Activated T-helper 2 cell treated with anti-CD3 and anti-CD28 coated beads, Interferon-gamma antibody, Interleukin-2, Interleukin-4, amounts not matched to agents 10 μg/mL and 5 μg/mL and 100 μg/mL, durations not matched to agents 14 hours and 24 hours and 36 hours (primary cell): ENCODE measurements at regions of chr7 and their contacts with region 1.

Region 1: DNA sequence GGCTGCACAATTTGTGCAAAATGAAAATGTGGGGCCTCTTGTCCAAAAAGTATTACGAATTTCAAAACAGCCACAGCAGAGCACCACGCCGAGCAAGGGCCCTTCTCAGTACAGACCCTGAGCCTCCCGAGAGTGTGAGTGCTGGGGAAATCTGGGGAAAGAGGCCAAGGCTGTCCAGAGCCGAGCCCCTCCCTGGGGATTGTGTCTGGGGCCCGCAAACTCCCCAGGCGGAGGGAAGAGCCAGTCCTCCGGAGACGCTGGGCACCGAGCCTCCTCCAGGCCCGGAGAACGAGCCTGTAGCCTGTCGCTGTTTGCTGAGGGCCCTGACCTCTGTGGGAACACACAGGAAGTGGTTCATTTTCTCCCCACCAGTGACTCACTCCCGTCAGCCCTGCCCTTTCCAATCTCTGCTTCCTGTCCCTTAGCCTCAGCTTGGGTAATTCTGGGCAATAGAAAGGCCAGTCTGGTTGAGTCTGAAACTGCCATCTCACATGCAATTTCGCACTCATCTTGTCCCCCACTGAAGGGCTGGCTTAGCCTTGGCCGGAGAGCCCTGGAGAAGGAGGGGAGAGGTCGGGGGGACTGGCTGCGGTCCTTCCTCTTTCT is 19.5 kb upstream of the GNA12 start:
- DNase-seq: peak; percentile 71
- H3K4me3 Mint-ChIP-seq: peak overlapping the region; percentile 68
- H3K27ac Mint-ChIP-seq: peak overlapping the region; percentile 94
- H3K4me1 Mint-ChIP-seq: peaks cover 23% of the 10 kb centered on the region
- H3K27me3 Mint-ChIP-seq: no peaks in the 10 kb centered on the region

Region 2: DNA sequence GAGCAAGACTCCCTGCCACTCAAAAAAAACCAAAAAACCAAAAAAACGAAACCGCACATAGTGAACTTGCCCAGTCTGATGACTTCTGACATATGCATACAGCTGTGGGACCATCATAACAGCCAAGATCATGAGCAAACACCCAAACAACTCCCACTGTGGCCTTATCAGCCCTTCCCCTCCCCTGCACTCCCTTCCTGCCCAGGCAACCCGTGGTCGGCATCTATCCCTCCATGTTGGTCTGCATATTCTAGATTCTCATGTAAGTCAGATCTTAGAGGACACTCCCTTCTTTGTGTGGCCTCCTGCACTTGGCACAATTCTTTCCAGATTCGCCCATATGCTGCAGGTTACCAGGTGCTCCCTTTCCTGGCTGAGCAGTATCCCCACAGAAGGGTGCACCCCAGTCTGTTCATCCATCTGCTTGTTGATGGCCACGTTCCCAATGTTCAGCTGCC is 92.3 kb before region 1 on chr7:
- intact Hi-C with region 1: loop called (anchors 2 kb)
- DNase-seq: no peak
- H3K4me3 Mint-ChIP-seq: peak overlapping the region; percentile 8
- H3K27ac Mint-ChIP-seq: peak overlapping the region; percentile 94
- H3K4me1 Mint-ChIP-seq: peaks cover 48% of the 10 kb centered on the region
- H3K27me3 Mint-ChIP-seq: no peaks in the 10 kb centered on the region

Region 3: DNA sequence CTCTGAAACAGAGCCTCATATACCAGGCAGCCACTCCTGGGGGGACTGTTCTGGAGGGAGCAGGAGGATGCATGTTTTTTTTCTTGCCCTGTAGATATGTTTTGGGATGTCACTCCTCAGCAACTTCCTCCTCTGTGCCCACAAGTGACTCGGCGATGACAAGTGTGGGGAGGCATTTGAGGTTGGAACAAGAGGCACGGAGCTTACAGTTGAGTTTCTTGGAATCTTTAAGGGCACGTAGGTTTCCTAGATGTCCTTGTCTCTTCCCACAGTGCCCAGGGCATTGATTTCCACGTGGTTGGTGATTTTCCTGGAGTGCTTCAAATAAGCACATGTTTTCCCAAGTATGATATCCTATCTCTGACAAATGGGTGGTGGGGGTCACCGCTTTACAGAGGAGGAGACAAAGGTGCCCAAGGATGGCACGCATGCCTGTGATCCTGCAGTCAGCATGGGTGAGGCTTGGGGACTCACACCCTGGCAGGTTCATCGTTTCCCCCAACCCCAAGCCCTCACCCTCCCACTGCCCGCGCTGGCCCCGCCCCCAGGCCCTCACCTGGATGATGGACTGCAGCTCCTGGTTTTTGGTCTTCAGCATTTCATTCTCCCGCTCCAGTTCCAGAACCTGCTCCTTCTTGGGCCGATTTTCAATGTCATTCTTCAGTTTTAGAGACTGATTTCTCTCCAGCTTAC is 75.8 kb after region 1 on chr7:
- intact Hi-C with region 1: no loop called
- DNase-seq: no peak
- H3K4me3 Mint-ChIP-seq: no peak overlapping the region
- H3K27ac Mint-ChIP-seq: peak overlapping the region; percentile 40
- H3K4me1 Mint-ChIP-seq: peaks cover 8% of the 10 kb centered on the region
- H3K27me3 Mint-ChIP-seq: no peaks in the 10 kb centered on the region

Region 4: DNA sequence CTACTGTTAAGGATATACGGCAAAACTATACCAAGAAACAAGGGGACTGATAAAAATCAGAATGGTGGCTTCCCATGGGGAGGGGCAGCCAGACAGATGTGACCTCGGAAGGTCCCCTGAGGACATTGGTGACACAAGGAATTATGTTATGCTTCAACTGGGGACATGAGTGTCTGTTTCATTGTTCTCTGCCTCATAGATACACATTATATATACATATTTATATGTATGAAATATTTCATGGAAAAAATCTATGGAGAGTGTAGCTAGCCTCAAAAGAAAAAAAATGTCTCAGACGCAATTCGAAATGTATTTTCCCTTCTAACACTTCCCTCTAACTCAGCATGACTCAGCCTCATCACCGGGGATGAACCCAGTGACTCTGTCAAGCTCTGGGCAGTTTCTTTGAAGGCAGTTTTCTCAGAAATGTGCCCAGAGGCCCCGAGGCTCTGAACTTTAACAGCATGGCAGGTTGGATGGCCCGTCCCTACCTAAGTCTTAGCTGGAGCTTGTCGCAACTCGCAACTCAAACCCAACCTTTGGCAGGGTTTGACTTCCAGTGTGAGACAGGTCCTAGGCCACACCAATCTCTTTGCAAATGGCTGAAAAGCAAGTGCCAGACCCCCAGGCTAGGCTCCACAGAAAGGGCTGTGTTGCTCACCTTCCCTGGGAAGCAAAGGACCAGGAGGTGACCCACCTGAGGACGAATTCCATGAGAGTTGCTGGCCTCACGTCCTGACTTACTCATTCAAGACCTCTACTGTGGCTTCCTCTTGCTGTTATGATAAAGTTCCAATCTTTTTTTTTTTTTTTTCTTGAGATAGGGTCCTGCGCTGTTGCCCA is 93.2 kb after region 1 on chr7:
- intact Hi-C with region 1: loop called (anchors 10 kb)
- DNase-seq: no peak
- H3K4me3 Mint-ChIP-seq: peak overlapping the region; percentile 15
- H3K27ac Mint-ChIP-seq: peak overlapping the region; percentile 89
- H3K4me1 Mint-ChIP-seq: peaks cover 54% of the 10 kb centered on the region
- H3K27me3 Mint-ChIP-seq: no peaks in the 10 kb centered on the region

Region 5: DNA sequence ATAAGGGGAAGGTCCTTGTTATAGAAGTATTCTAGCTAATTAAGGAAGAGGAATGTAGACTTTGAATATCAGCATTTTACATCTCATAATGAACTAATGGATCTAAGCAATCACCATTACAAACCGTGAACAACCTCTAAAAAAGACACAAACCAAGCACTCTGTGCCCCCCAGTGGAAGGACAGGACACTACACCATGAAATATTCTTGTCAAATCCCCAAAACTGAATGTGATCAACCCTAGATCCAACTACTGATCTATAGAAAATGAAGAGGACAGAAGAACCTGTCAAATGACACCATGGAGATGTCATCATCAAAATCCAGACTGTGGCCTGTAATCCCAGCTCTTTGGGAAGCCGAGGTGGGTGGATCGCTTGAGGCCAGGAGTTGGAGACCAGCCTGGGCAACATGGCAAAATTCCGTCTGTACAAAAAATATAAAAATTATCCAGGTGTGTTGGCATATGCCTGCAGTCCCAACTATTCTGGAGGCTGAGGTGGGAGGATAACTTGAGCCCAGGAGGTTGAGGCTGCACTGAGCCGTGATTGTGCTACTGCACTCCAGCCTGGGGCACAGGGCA is 291.4 kb after region 1 on chr7:
- intact Hi-C with region 1: loop called (anchors 2 kb)
- DNase-seq: peak; percentile 48
- H3K4me3 Mint-ChIP-seq: no peak overlapping the region
- H3K27ac Mint-ChIP-seq: no peak overlapping the region
- H3K4me1 Mint-ChIP-seq: peaks cover 8% of the 10 kb centered on the region
- H3K27me3 Mint-ChIP-seq: peaks cover 11% of the 10 kb centered on the region

Region 6: DNA sequence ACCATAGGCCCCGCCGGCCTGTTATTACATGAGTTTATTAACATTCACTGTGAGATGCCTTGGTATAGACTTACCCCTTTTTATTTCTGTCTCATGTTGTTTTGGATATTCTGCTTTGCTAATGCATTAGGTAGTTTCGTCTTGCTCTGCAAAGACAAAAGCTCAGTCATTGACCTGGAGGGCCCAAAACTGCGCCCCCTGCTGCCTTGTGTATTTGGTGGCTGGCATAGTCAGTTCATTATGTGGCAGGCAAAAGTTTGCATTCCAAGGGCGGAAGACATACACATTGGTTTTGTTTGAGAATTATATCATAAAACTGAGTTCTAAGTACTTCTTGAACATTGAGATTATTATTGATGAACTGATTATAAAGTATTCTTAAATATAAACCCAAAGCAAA is 810.0 kb after region 1 on chr7:
- intact Hi-C with region 1: loop called (anchors 5 kb)
- DNase-seq: peak; percentile 11
- H3K4me3 Mint-ChIP-seq: no peak overlapping the region
- H3K27ac Mint-ChIP-seq: no peak overlapping the region
- H3K4me1 Mint-ChIP-seq: no peaks in the 10 kb centered on the region
- H3K27me3 Mint-ChIP-seq: no peaks in the 10 kb centered on the region